WTC11 (cell line): ENCODE measurements at regions of chrX and their contacts with region 1.

Region 1: DNA sequence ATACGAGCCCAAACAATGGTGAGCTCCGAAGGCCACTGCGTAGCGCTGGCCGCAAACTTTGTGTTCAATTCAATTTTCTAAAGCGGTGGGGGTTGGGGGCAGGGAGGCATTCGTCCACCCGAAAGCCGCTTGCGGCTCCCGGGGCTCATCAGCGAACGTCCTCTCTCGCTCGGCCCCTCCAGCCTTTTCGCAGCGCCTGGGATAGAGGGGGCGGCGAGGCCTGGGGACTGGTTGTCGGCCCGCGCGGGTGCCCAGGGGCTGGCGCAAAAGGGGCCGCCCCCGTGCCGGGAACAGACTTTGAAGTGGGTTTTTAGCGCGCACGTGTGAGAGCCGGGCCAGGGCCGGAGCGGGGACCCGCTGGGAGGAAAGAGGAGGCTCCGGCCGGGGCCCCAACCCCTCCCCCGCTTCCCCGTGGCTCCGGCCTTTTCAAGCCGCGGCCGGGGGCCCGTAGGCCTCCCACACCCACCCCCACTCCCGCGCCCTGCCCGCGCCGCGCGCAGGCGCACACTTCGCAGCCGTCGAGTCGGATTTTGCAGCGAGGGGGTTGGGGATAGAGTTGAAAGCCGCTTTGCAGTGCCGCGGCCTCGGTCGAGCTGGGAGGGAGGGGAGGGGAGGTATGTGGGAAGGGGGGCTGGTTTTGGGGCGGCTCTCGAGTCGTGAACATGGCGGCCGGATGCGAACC is 8.3 kb downstream of the ZIC3 start:
- DNase-seq: peak; percentile 82
- ATAC-seq: peak; percentile 62
- H3K4me3 Mint-ChIP-seq: peak overlapping the region; percentile 97
- H3K27ac Mint-ChIP-seq: peak overlapping the region; percentile 99
- H3K4me1 Mint-ChIP-seq: peaks cover 67% of the 10 kb centered on the region
- H3K27me3 Mint-ChIP-seq: no peaks in the 10 kb centered on the region
- CTCF ChIP-seq: no peak

Region 2: GRCh38 chrX:137441711-137442110 is 132.5 kb before region 1 on chrX:
- CTCF ChIA-PET with region 1: no interaction called
- POLR2A ChIA-PET with region 1: no interaction called
- DNase-seq: no peak
- ATAC-seq: no peak
- H3K4me3 Mint-ChIP-seq: no peak overlapping the region
- H3K27ac Mint-ChIP-seq: no peak overlapping the region
- H3K4me1 Mint-ChIP-seq: no peaks in the 10 kb centered on the region
- H3K27me3 Mint-ChIP-seq: no peaks in the 10 kb centered on the region
- CTCF ChIP-seq: no peak

Region 3: DNA sequence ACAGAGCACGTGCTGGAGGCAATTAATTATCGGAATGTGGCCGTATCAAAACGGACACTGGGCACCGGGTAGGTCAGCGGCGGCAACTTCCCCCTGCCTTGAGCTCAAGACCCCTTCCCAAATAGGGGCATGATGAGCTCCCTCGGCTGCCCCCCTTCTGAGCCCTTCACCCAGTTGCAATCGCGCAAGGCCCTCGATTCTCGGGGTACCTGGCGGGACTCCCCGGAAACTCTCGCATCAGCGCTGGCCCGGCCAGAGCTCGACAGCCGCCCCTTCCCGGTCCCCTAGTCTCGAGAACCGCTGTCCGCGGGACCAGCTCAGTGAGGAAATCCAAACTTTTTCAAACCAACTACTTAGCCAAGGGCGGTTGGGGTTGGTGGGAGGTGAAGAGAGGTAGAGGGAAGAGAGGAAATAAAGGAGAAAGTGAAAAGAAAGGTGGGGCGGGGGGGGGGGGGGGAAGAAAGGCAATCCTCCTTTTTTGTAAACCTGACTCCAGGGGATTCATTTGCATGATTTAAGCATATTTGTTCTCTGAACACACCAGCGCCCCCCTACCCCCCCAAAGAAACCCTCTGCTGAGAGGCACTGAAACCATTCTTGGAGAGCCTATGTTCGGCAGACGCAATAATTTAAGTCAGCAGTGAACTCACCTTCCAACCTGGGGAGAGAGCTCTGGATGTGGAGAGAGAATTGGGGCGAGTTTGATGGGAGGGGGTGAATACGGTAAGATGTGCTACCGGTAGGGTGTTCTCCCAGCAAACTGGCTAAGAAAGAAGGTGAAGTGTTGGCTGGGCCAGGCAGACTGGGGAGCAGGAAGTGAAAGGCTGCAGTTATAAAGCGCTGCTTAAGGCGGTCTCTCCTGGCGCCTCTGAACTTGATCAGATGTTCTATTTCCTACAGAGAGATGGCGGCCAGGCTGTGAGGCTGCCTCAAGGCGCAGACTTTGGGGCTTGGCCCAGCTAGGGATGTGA is 10.3 kb before region 1 on chrX:
- CTCF ChIA-PET with region 1: no interaction called
- POLR2A ChIA-PET with region 1: interaction called, 10 read pairs
- DNase-seq: peak; percentile 28
- ATAC-seq: peak; percentile 53
- H3K4me3 Mint-ChIP-seq: peak overlapping the region; percentile 86
- H3K27ac Mint-ChIP-seq: peak overlapping the region; percentile 96
- H3K4me1 Mint-ChIP-seq: peaks cover 34% of the 10 kb centered on the region
- H3K27me3 Mint-ChIP-seq: no peaks in the 10 kb centered on the region
- CTCF ChIP-seq: no peak

Region 4: GRCh38 chrX:137587151-137587550 is 12.9 kb after region 1 on chrX:
- CTCF ChIA-PET with region 1: no interaction called
- POLR2A ChIA-PET with region 1: no interaction called
- DNase-seq: no peak
- ATAC-seq: no peak
- H3K4me3 Mint-ChIP-seq: no peak overlapping the region
- H3K27ac Mint-ChIP-seq: no peak overlapping the region
- H3K4me1 Mint-ChIP-seq: peaks cover 67% of the 10 kb centered on the region
- H3K27me3 Mint-ChIP-seq: no peaks in the 10 kb centered on the region; the same call in 1 of the 2 replicates
- CTCF ChIP-seq: no peak